ENCODE measurements at regions of chr17 and their contacts with region 1.

Region 1: GRCh38 chr17:71412803-71413202 is 708.0 kb upstream of the SOX9 start:
- DNase-seq: peak; percentile 93
- ATAC-seq: peak; percentile 93
- H3K4me3 ChIP-seq: peak overlapping the region in 1 of 2 experiments; percentile 17; a peak in 2 of 4 replicates
- H3K27ac ChIP-seq: peak overlapping the region; percentile 31; the same call in 1 of the 2 replicates
- H3K4me1 ChIP-seq: peaks cover 9 to 36% of the 10 kb centered on the region in 2 experiments; a peak in 3 of 4 replicates
- H3K27me3 ChIP-seq: no peaks in the 10 kb centered on the region
- CTCF ChIP-seq: no peak
- POLR2A ChIP-seq: no peak
- RAD21 ChIP-seq: peak; percentile 50

Region 2: GRCh38 chr17:70825321-70826125 is 587.3 kb before region 1 on chr17:
- CTCF ChIA-PET with region 1: no interaction called
- POLR2A ChIA-PET with region 1: no interaction called
- RAD21 ChIA-PET with region 1: no interaction called
- intact Hi-C with region 1: no loop called
- DNase-seq: no peak
- ATAC-seq: no peak
- H3K4me3 ChIP-seq: no peak overlapping the region
- H3K27ac ChIP-seq: no peak overlapping the region
- H3K4me1 ChIP-seq: peaks cover 0 to 4% of the 10 kb centered on the region in 2 experiments; a peak in 1 of 4 replicates
- H3K27me3 ChIP-seq: no peaks in the 10 kb centered on the region
- CTCF ChIP-seq: no peak
- POLR2A ChIP-seq: no peak
- RAD21 ChIP-seq: no peak

Region 3: DNA sequence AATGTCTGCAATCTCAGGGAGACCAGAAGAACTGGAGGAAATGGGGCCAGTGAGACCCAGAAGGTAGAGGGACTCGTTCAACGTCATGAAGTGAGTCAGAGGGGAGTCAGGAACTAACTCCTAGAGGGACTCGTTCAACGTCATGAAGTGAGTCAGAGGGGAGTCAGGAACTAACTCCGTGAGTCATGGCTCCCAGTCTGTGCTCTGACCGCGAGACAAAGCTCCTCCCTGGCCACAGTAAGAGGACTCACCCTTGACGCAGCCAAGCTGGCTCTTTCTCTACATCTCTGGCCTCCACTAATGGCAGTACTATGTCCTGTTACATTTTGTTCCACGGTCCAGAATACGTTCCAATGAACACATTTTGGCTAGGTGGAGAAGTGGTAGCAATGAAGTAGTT is 341.0 kb before region 1 on chr17:
- CTCF ChIA-PET with region 1: no interaction called
- POLR2A ChIA-PET with region 1: no interaction called
- RAD21 ChIA-PET with region 1: no interaction called
- intact Hi-C with region 1: loop called (anchors 10 kb)
- DNase-seq: peak; percentile 98
- ATAC-seq: peak; percentile 100
- H3K4me3 ChIP-seq: peak overlapping the region in 1 of 2 experiments; percentile 34; a peak in 2 of 4 replicates
- H3K27ac ChIP-seq: peak overlapping the region; percentile 32; the same call in 1 of the 2 replicates
- H3K4me1 ChIP-seq: peaks cover 6 to 22% of the 10 kb centered on the region in 2 experiments; a peak in 3 of 4 replicates
- H3K27me3 ChIP-seq: no peaks in the 10 kb centered on the region
- CTCF ChIP-seq: no peak
- POLR2A ChIP-seq: peak; percentile 51
- RAD21 ChIP-seq: no peak

Region 4: DNA sequence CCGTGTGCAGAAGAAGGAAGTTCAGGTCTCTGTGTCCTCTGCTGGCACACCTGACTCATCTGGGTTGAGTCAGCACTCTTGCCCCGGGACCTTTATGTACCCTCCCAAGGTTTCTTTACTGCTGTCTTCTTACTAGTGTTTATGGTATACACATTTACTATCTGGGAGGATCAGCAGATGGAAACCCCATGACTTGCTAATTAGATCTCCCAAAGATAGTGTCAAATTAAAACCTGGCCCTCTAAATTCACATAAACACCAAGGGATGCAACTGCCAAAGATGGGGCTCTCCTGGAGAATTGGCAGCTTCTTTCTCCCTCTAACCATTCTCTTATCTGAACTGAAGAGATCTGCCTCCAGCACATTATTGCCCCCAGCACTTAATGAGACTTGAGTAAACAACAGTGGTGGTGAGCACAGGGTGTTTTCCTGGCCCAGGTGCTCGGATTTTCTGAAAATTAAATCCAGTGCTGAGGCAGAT is 10.1 kb before region 1 on chr17:
- CTCF ChIA-PET with region 1: no interaction called
- POLR2A ChIA-PET with region 1: interaction called, 10 read pairs
- RAD21 ChIA-PET with region 1: no interaction called
- intact Hi-C with region 1: no loop called
- DNase-seq: no peak
- ATAC-seq: peak; percentile 47; the same call in 1 of the 2 replicates
- H3K4me3 ChIP-seq: no peak overlapping the region
- H3K27ac ChIP-seq: no peak overlapping the region
- H3K4me1 ChIP-seq: peaks cover 0 to 16% of the 10 kb centered on the region in 2 experiments; a peak in 2 of 4 replicates
- H3K27me3 ChIP-seq: no peaks in the 10 kb centered on the region
- CTCF ChIP-seq: no peak
- POLR2A ChIP-seq: no peak
- RAD21 ChIP-seq: no peak

Region 5: DNA sequence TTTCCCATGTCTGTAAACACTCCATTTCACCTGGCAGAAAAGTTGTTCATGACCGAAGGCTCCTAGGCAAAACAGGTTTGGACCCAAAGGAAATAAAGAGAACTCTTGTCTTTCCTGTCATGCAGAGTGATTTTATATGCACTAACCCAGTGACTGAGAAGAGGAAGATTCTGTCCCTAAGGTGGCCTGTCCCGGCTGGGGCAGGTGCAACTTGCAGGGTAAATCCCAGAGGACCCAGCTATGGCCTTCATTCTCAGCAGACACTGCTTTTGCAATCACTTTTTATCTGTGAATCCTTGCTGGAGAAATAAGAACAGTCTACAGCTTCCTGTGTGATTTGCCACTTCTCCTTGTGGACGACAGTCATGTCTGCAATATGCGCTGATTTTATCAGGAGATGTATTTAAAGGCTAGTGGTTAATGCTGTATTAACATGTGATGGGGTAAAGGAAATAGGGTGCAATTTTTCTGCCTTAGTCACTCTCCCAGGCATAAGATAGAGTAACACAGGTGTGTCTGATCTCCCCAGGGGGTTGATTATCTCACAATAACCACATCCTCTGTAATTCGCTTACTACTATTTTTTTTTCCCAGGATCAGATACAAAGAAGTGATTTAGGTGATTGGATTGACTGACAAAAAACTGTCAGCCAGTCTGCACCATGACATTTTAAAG is 11.2 kb after region 1 on chr17:
- CTCF ChIA-PET with region 1: interaction called, 4 read pairs
- POLR2A ChIA-PET with region 1: interaction called, 3 read pairs
- RAD21 ChIA-PET with region 1: no interaction called
- intact Hi-C with region 1: loop called (anchors 1 kb)
- DNase-seq: peak; percentile 98
- ATAC-seq: peak; percentile 95
- H3K4me3 ChIP-seq: peak overlapping the region in 1 of 2 experiments; percentile 12; a peak in 2 of 4 replicates
- H3K27ac ChIP-seq: peak overlapping the region; percentile 60
- H3K4me1 ChIP-seq: peaks cover 19 to 28% of the 10 kb centered on the region in 2 experiments
- H3K27me3 ChIP-seq: no peaks in the 10 kb centered on the region
- CTCF ChIP-seq: peak in 2 of 3 experiments; percentile 8 to 10; a peak in 2 of 6 replicates
- POLR2A ChIP-seq: no peak
- RAD21 ChIP-seq: peak; percentile 40; the same call in 1 of the 2 replicates

Region 6: DNA sequence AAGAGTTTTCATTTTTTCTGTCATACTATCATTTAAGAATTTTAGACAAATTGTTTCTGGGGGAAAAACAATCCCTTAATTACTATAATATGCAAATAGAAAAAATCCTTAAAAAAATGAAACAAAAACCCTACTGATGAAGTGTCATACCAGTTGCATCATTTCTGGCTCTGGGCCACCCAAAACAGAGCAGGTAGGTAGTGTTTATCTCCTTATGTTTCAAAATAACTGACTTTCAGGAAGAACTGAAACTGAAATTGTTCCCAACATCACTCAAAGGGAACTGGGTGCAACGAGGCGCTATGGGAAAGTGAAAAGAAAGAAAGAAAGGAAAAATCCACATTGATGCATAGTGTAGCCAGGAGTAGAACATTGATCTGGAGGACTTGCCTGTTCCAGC is 54.9 kb after region 1 on chr17:
- CTCF ChIA-PET with region 1: no interaction called
- POLR2A ChIA-PET with region 1: no interaction called
- RAD21 ChIA-PET with region 1: no interaction called
- intact Hi-C with region 1: no loop called
- DNase-seq: no peak
- ATAC-seq: no peak
- H3K4me3 ChIP-seq: no peak overlapping the region
- H3K27ac ChIP-seq: no peak overlapping the region
- H3K4me1 ChIP-seq: peaks cover 0 to 4% of the 10 kb centered on the region in 2 experiments; a peak in 2 of 4 replicates
- H3K27me3 ChIP-seq: no peaks in the 10 kb centered on the region
- CTCF ChIP-seq: no peak
- POLR2A ChIP-seq: no peak
- RAD21 ChIP-seq: no peak

Region 7: GRCh38 chr17:71636644-71637043 is 223.8 kb after region 1 on chr17:
- CTCF ChIA-PET with region 1: no interaction called
- POLR2A ChIA-PET with region 1: no interaction called
- RAD21 ChIA-PET with region 1: no interaction called
- intact Hi-C with region 1: no loop called
- DNase-seq: no peak
- ATAC-seq: no peak
- H3K4me3 ChIP-seq: no peak overlapping the region
- H3K27ac ChIP-seq: no peak overlapping the region
- H3K4me1 ChIP-seq: peaks cover 26 to 32% of the 10 kb centered on the region in 2 experiments
- H3K27me3 ChIP-seq: no peaks in the 10 kb centered on the region
- CTCF ChIP-seq: no peak
- POLR2A ChIP-seq: no peak
- RAD21 ChIP-seq: no peak

Region 8: GRCh38 chr17:71709946-71710345 is 297.1 kb after region 1 on chr17:
- CTCF ChIA-PET with region 1: no interaction called
- POLR2A ChIA-PET with region 1: no interaction called
- RAD21 ChIA-PET with region 1: no interaction called
- intact Hi-C with region 1: no loop called
- DNase-seq: no peak
- ATAC-seq: no peak
- H3K4me3 ChIP-seq: no peak overlapping the region
- H3K27ac ChIP-seq: no peak overlapping the region
- H3K4me1 ChIP-seq: no peaks in the 10 kb centered on the region
- H3K27me3 ChIP-seq: no peaks in the 10 kb centered on the region
- CTCF ChIP-seq: no peak
- POLR2A ChIP-seq: no peak
- RAD21 ChIP-seq: no peak